BJ (cell line): ENCODE measurements at regions of chr2 and their contacts with region 1.

Region 1: DNA sequence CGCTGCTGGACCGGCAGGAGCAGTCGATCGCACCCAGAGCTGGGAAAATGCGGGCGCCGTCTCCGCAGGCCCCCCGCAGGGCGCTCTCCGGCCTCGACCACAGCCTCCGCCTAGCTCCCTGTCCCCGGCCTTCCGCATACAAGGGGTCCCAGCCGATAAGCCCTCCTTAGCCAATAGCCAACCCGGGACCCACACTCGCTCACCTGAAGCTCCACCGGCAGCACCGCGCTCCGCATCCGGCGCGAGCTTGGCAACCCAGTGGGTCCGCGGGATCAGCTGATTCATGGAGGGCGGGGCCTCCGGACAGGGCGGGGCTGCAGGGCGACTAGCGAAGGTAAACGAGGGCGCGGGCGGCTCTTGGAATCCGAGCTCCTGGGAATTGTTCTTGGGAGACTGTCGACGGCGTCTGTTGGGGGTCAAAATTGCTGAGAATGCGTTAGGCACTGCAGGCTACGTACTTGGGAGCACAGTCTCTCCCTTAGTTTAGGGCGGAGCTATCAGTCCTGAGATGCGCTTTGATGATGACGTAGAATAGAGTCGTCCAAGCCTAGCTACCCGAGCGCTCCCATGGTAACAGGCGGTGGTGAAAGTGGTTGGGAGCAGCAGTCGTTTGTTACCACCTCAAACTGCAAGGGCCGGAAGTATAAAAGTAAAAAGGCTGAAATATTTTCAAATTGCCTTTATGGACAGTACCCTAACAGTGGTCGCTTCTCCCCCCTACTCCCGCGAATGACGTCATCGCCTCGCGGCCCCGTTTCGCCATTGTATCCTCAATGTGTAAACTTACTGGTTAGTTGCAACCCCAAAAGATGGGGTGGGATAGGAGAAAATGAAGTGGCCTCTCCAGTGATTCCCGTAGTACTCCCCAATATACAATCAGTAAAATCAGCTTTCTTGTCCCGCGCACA is at the start of gene ALS2:
- DNase-seq: peak; percentile 99
- H3K4me3 ChIP-seq: peak within 1 kb of the TSS; percentile 79
- H3K27me3 ChIP-seq: no peaks in the 10 kb centered on the region
- CTCF ChIP-seq: no peak
- polyA plus RNA-seq, gene ALS2: 20.5 and 25.2 TPM in 2 replicates

Region 2: GRCh38 chr2:201707753-201708152 is 73.2 kb before region 1 on chr2:
- CTCF ChIA-PET with region 1: no interaction called
- POLR2A ChIA-PET with region 1: no interaction called
- DNase-seq: no peak
- H3K4me3 ChIP-seq: no peak overlapping the region
- H3K27me3 ChIP-seq: no peaks in the 10 kb centered on the region
- CTCF ChIP-seq: peak; percentile 48

Region 3: DNA sequence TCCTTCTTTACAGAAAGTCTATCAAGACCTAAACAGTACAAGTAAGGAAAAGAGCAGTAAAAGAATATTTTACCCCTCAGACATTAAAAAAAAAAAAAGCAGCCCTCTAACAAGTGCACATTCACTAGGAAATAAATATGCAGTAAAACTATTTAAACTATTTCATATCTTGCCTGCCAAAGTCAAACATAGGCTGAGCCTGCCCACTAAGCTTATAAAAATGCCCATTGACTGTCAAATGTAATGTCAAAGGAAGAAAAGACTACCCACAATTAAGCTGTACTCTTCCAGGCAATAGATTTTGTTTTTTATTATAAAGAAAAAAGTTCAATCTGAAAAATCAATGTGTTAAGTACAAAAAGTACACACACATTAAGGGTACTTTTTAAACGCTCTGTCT is 12.0 kb before region 1 on chr2:
- CTCF ChIA-PET with region 1: interaction called, 4 read pairs
- POLR2A ChIA-PET with region 1: interaction called, 11 read pairs
- DNase-seq: no peak
- H3K4me3 ChIP-seq: no peak overlapping the region
- H3K27me3 ChIP-seq: no peaks in the 10 kb centered on the region
- CTCF ChIP-seq: no peak